Activated B cell treated with CpG ODN at 0.5 μM for 24 hours (primary cell): ENCODE measurements at regions of chr13 and their contacts with region 1.

Region 1: DNA sequence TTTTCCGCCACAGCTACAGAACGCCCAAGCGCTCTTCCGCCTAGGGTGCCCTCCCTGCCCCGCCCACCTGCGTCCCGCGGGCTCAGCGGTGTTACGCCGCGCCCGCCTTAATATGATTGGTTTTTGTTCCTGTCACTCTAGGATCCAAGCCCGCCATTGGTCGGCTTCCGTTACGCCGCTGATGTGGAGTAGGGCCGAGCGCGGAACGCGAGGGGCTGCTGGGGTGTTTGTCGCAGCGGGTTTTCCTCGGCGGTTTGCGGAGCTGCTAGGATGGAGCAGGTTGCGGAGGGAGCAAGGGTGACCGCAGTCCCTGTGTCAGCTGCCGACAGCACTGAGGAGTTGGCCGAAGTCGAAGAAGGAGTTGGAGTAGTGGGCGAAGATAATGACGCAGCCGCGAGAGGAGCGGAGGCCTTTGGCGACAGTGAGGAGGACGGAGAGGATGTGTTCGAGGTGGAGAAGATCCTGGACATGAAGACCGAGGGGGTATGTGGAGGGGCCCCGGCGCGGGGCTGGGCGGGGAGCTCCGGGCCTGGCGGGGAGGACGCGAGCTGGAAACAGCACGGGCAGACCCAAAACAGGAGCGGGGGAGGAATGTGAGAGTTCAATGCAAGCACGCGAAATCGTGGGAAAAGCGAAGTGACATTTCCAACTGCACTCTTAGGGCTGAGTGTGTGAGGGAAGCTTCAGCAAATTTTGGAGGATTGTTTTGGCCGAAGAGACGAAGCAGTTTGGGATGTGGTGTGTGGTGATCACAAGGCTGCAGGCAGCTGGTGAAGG is at the start of gene MPHOSPH8:
- DNase-seq: peak; percentile 82
- ATAC-seq: peak; percentile 97
- H3K4me3 Mint-ChIP-seq: peak within 1 kb of the TSS; percentile 100
- H3K27ac Mint-ChIP-seq: peak within 1 kb of the TSS; percentile 98
- H3K4me1 Mint-ChIP-seq: peaks cover 38% of the 10 kb centered on the region
- H3K27me3 Mint-ChIP-seq: no peaks in the 10 kb centered on the region
- CTCF ChIP-seq: no peak
- total RNA-seq, gene MPHOSPH8: 32.5 and 43.6 TPM in 2 replicates

Region 2: GRCh38 chr13:19587635-19588300 is 45.9 kb before region 1 on chr13:
- CTCF ChIA-PET with region 1: no interaction called
- POLR2A ChIA-PET with region 1: no interaction called
- intact Hi-C with region 1: loop called (anchors 2 kb)
- DNase-seq: no peak
- ATAC-seq: peak; percentile 38
- H3K4me3 Mint-ChIP-seq: peak overlapping the region; percentile 79
- H3K27ac Mint-ChIP-seq: peak overlapping the region; percentile 82
- H3K4me1 Mint-ChIP-seq: peaks cover 20% of the 10 kb centered on the region
- H3K27me3 Mint-ChIP-seq: peaks cover 12% of the 10 kb centered on the region
- CTCF ChIP-seq: no peak

Region 3: GRCh38 chr13:19645000-19645399 is 11.3 kb after region 1 on chr13:
- CTCF ChIA-PET with region 1: no interaction called
- POLR2A ChIA-PET with region 1: no interaction called
- intact Hi-C with region 1: loop called (anchors 1 kb)
- DNase-seq: no peak
- ATAC-seq: no peak
- H3K4me3 Mint-ChIP-seq: no peak overlapping the region
- H3K27ac Mint-ChIP-seq: no peak overlapping the region
- H3K4me1 Mint-ChIP-seq: peaks cover 7% of the 10 kb centered on the region
- H3K27me3 Mint-ChIP-seq: no peaks in the 10 kb centered on the region
- CTCF ChIP-seq: no peak

Region 4: GRCh38 chr13:19782049-19782726 is 148.5 kb after region 1 on chr13:
- CTCF ChIA-PET with region 1: no interaction called
- POLR2A ChIA-PET with region 1: no interaction called
- intact Hi-C with region 1: loop called (anchors 2 kb)
- DNase-seq: peak; percentile 57
- ATAC-seq: peak; percentile 61
- H3K4me3 Mint-ChIP-seq: peak overlapping the region; percentile 97
- H3K27ac Mint-ChIP-seq: peak overlapping the region; percentile 98
- H3K4me1 Mint-ChIP-seq: peaks cover 15% of the 10 kb centered on the region
- H3K27me3 Mint-ChIP-seq: no peaks in the 10 kb centered on the region
- CTCF ChIP-seq: no peak

Region 5: DNA sequence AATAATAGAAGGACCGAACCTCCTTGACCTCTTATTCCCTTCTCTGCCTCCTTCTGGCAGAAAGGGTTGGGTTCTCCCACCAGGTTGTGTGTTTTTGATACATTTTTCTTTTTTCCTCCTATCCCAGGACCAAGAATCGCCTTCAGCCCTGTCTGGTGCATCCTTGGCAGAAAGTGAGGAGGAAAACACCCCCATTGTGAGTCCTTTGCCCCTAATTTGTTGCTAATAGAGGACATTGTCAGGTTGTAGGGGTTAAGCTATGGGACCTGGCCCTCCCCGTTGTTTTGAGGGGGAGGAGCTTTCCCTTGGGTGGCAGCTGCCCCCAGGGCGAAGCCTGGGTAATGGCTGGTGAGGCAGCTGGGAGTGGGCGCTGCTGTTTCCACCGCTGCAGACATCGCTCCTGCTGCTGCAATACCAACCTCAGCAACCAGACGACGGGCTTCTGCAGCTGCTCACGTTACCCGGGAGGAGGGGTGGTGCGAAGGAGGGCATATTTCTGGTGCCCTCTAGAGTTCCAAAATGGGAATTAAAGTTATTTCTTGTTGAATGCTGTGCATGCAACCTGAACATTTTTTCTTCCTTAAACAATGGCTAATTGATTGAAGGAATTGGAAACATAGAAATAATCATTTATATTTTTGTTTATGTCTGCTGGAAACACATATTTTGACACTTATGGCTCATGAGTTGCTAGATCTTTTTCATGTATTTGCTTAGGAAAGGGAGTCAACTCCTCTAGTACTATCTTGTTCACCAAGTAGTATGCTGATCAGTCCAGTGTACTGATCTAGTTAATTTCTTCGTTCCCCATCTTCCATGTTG is 326.4 kb after region 1 on chr13:
- CTCF ChIA-PET with region 1: no interaction called
- POLR2A ChIA-PET with region 1: interaction called, 7 read pairs
- intact Hi-C with region 1: loop called (anchors 1 kb)
- DNase-seq: peak; percentile 60
- ATAC-seq: peak; percentile 43
- H3K4me3 Mint-ChIP-seq: peak overlapping the region; percentile 98
- H3K27ac Mint-ChIP-seq: peak overlapping the region; percentile 98
- H3K4me1 Mint-ChIP-seq: peaks cover 33% of the 10 kb centered on the region
- H3K27me3 Mint-ChIP-seq: no peaks in the 10 kb centered on the region
- CTCF ChIP-seq: no peak